Natural killer cell (primary cell): ENCODE measurements at regions of chr22 and their contacts with region 1.

Region 1: DNA sequence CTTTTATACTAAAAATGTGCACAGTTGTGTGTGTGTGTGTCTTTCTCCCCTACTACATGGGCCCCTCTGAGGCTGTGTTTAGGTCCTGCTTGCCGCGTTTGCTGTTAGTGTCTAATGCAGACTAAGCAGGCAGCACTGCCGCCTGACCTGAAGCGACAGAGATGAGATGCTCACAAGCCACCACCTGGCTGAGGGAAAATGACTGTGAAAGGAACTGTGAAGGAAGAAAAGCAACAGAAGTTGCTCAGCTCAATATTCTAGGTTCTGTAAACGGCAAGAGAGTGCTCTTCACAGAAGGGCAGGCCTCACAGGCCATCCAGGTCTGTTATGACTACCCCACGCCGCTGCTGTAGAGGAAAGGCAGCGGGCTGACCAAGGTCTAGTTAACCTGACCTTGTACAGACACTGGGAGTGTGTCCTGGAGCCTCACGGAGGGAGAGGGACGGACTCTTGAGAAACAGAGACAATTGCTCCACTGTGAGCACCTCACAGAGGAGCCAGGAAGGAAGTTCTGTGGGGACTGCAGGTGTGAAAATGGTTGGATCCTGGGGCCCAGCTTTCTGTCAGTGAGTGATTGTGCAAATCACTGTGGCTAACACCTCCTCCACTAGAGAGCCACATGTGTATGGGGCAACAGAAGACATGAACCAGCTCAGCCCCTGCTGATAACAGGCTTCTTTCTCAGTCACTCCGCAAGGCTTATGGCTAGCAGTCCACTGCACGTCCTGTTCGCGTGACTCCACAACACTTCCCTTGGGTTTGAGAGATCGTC is 31.3 kb upstream of the YPEL1 start:
- DNase-seq: peak; percentile 77 to 88
- ATAC-seq: peak; percentile 61 to 84 (median 81)
- H3K4me3 ChIP-seq: peak overlapping the region; percentile 14
- H3K4me3 Mint-ChIP-seq: peak overlapping the region; percentile 64
- H3K27ac ChIP-seq: peak overlapping the region; percentile 88
- H3K27ac Mint-ChIP-seq: peak overlapping the region; percentile 98 to 99
- H3K4me1 ChIP-seq: peaks cover 98% of the 10 kb centered on the region
- H3K4me1 Mint-ChIP-seq: peaks cover 82 to 88% of the 10 kb centered on the region in 2 donors
- H3K27me3 ChIP-seq: no peaks in the 10 kb centered on the region
- H3K27me3 Mint-ChIP-seq: no peaks in the 10 kb centered on the region
- CTCF ChIP-seq: no peak

Region 2: GRCh38 chr22:21735200-21736076 is 31.4 kb before region 1 on chr22 and contains the start of gene YPEL1:
- intact Hi-C with region 1: loop called (anchors 1 kb)
- DNase-seq: peak; percentile 97 to 99
- ATAC-seq: peak; percentile 85 to 97 (median 89)
- H3K4me3 ChIP-seq: peak within 1 kb of the TSS; percentile 66
- H3K4me3 Mint-ChIP-seq: peak within 1 kb of the TSS; percentile 97
- H3K27ac ChIP-seq: peak within 1 kb of the TSS; percentile 82
- H3K27ac Mint-ChIP-seq: peak within 1 kb of the TSS; percentile 95 to 96
- H3K4me1 ChIP-seq: peaks cover 63% of the 10 kb centered on the region
- H3K4me1 Mint-ChIP-seq: peaks cover 65 to 71% of the 10 kb centered on the region in 2 donors
- H3K27me3 ChIP-seq: no peaks in the 10 kb centered on the region
- H3K27me3 Mint-ChIP-seq: no peaks in the 10 kb centered on the region
- CTCF ChIP-seq: no peak
- total RNA-seq, gene YPEL1: 59.9 to 86.3 (median 68.8) TPM

Region 3: DNA sequence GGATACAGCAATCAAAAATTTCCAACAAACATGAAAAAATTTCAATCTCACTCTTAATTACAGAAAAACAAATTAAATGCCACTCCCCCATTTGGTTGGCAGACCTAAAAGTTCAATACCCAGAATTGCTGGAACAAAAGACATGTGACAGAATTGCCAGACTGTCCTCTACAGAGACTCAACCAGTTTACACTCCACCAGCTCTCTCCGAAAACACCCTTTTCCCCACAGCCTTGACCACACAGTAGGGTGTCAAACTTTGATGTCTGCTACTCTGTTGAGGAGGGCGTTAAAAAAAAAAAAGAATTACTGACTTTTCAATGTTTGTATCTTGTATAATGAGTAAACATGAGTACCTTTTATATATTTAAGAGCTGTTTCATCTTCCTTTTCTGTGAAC is 13.4 kb after region 1 on chr22:
- intact Hi-C with region 1: loop called (anchors 1 kb)
- DNase-seq: peak; percentile 43 to 60
- ATAC-seq: peak; percentile 91 to 99 (median 92)
- H3K4me3 ChIP-seq: no peak overlapping the region
- H3K4me3 Mint-ChIP-seq: peak overlapping the region; percentile 74
- H3K27ac ChIP-seq: no peak overlapping the region
- H3K27ac Mint-ChIP-seq: peak overlapping the region; percentile 84 to 87
- H3K4me1 ChIP-seq: peaks cover 32% of the 10 kb centered on the region
- H3K4me1 Mint-ChIP-seq: peaks cover 42 to 55% of the 10 kb centered on the region in 2 donors
- H3K27me3 ChIP-seq: no peaks in the 10 kb centered on the region
- H3K27me3 Mint-ChIP-seq: no peaks in the 10 kb centered on the region
- CTCF ChIP-seq: no peak

Region 4: DNA sequence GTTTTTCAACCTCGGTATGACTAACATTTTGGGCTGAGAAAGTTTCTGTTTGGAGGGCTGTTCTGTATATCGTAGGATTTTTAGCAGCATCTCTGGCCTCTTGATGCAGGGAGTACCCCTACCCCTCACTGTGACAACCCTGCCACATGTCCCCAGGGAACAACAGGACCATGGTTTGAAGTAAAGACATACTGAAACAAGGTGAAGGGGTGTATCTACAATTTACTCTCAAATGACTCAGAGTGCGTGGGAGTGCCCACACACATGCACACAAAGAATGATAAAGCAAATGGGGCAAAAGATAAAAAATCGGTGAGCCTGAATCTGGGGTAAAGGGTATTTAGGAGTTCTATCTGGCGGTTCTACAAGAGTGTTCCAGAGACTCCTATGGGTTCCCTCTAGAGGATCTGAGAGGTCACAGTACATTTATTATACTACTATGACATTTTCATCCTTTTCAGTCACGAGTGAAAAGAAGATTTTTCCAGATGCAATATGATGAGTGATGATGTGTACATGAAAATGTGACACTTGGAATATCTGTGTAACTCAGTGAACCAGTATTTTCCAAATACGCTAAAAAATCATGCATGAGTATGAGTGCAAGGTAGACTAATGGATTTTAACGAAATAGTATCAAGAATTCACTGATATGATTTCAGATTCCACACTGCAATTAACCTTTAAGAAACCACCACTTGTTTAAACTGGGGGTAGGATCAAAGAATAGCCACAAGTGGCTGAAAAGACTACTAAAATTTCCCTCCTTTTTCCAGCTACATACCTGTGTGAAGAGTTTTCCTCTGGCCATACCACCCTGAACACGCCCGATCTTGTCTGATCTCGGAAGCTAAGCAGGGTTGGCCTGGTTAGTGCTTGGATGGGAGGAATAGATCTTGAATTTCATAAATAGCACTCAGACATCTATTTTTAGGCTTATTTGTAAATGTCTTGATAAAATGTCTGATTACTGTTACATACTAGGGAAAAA is 25.1 kb after region 1 on chr22:
- intact Hi-C with region 1: no loop called
- DNase-seq: no peak
- ATAC-seq: peak in 2 of 3 donors; percentile 35 to 49
- H3K4me3 ChIP-seq: no peak overlapping the region
- H3K4me3 Mint-ChIP-seq: no peak overlapping the region
- H3K27ac ChIP-seq: no peak overlapping the region
- H3K27ac Mint-ChIP-seq: peak overlapping the region; percentile 43 to 45
- H3K4me1 ChIP-seq: peaks cover 6% of the 10 kb centered on the region
- H3K4me1 Mint-ChIP-seq: peaks cover 15 to 17% of the 10 kb centered on the region in 2 donors
- H3K27me3 ChIP-seq: no peaks in the 10 kb centered on the region
- H3K27me3 Mint-ChIP-seq: no peaks in the 10 kb centered on the region
- CTCF ChIP-seq: no peak

Region 5: DNA sequence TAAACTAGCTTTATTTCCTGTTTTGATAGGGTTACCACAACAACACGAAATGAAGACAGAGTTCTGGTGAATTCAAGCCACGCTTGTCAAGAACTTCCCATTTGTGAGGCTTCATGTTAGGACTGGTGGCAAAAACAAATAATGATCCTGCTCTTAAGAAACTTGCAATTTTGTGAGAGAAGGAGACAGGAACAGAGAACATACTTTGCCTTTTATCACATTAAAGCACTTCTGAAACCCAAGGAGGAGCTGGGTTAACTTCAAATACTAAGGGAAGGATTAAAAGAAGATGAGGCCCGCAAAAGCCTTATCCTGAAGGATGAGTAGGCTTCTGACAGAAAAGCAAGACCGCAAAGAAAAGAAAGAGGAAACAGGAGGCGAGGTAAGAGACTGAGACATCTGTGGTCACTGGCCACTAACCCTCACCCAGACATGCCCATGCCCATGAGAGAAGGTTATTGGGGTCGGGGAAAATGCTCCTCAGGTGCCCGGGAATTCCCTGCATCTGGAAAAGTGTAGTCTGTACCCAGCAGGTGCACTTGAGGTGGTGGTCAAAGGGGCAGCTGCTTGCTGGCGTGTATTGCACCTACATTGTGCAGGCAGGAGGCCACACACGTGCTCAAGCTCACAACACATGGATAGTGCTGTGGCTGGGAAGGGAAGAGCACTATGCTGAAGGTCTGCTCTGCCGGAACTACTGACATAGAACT is 50.1 kb after region 1 on chr22:
- intact Hi-C with region 1: loop called (anchors 2 kb)
- DNase-seq: peak; percentile 33 to 87
- ATAC-seq: peak; percentile 89 to 94 (median 90)
- H3K4me3 ChIP-seq: no peak overlapping the region
- H3K4me3 Mint-ChIP-seq: peak overlapping the region; percentile 88
- H3K27ac ChIP-seq: peak overlapping the region; percentile 88
- H3K27ac Mint-ChIP-seq: peak overlapping the region; percentile 93 to 97
- H3K4me1 ChIP-seq: peaks cover 61% of the 10 kb centered on the region
- H3K4me1 Mint-ChIP-seq: peaks cover 70 to 78% of the 10 kb centered on the region in 2 donors
- H3K27me3 ChIP-seq: no peaks in the 10 kb centered on the region
- H3K27me3 Mint-ChIP-seq: no peaks in the 10 kb centered on the region
- CTCF ChIP-seq: no peak

Region 6: DNA sequence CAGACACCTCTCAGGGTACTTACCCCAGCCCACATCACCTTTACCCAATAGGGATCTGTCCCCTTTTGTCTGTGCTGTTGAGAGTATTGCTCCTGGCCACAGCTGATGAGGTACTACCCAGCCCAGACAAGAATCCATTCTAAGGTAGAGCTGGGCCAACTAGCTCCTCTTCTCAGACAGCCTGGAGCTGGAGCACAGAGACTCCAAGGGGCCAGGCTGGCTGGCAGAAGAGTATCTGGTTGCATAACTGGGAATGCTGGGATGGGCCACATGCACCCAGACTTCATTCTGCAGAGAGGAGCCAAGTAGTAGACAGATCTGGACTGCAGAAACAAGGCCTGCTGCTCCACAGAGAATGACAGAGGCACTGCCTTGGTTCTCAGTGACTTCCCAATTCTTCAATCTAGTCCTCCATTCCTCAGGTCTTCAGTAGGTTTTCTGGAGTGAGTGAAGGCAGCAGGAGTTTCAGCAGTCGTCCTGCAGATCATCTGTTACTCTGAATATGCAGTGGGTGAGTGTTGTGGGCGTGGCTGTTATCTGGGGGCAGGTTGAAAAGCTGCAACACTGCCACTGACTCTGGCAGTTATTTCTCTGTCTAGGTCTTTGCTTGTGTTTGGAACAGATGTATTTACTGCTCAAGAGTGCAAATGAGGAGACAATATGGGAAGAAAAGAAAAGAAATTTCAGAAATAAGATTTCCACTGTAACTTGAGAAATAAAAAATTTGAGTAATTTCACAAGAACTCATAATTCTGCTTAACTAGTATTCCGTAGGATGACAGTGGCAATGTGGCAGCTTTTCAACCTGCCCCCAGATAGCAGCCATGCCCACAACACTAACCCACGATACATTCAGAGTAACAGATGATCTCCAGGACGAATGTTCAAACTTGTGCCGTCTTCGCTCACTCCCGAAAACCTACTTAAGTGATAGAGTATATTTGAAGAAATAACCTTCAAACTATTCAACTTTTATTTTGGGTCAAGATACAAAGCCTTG is 65.7 kb after region 1 on chr22:
- intact Hi-C with region 1: loop called (anchors 5 kb)
- DNase-seq: peak; percentile 39 to 42
- ATAC-seq: peak; percentile 86 to 93 (median 88)
- H3K4me3 ChIP-seq: no peak overlapping the region
- H3K4me3 Mint-ChIP-seq: peak overlapping the region; percentile 77
- H3K27ac ChIP-seq: peak overlapping the region; percentile 26
- H3K27ac Mint-ChIP-seq: peak overlapping the region; percentile 60 to 80
- H3K4me1 ChIP-seq: peaks cover 31% of the 10 kb centered on the region
- H3K4me1 Mint-ChIP-seq: peaks cover 80 to 83% of the 10 kb centered on the region in 2 donors
- H3K27me3 ChIP-seq: no peaks in the 10 kb centered on the region
- H3K27me3 Mint-ChIP-seq: no peaks in the 10 kb centered on the region
- CTCF ChIP-seq: no peak

Region 7: DNA sequence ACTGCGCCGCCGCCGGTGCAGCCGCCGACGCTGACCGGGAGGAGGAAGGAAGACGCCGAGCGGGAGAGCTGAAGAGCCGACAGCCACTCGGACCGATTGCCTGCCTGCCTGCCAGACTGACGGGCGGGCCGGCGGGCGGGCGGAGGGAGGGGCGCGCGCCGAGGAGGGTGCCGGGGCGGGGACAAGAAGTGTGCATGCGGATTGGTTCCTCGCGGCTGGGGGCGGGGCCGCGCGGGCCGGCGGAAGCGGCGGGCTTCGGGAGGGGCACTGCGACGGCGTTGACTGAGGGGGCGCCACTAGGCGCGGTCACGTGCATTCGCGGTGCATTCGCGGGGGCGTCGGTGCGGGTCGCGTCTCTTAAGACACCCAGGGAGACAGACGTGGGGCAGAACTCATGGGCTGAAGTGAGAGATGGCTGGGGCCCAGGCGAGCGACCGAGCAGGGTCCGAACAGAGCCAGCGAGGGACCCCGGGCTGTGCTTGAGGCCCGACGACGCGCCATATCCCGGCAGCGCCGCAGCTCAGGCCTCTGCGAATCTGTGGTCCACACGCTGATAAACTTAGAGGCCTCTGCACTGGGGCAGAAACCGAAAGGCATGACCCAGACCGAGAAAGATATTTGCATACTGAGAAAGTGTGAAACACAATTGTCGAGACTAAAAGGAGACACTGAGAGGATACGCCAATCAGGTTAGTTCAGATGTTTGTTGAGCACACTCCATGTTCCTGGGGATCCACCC is 100.8 kb after region 1 on chr22 and contains the start of gene MAPK1:
- intact Hi-C with region 1: loop called (anchors 2 kb)
- DNase-seq: peak; percentile 95
- ATAC-seq: peak; percentile 88 to 97 (median 90)
- H3K4me3 ChIP-seq: peak within 1 kb of the TSS; percentile 88
- H3K4me3 Mint-ChIP-seq: peak within 1 kb of the TSS; percentile 98
- H3K27ac ChIP-seq: peak within 1 kb of the TSS; percentile 99
- H3K27ac Mint-ChIP-seq: peak within 1 kb of the TSS; percentile 94 to 96
- H3K4me1 ChIP-seq: peaks cover 32% of the 10 kb centered on the region
- H3K4me1 Mint-ChIP-seq: peaks cover 50 to 54% of the 10 kb centered on the region in 2 donors
- H3K27me3 ChIP-seq: no peaks in the 10 kb centered on the region
- H3K27me3 Mint-ChIP-seq: no peaks in the 10 kb centered on the region
- CTCF ChIP-seq: peak; percentile 32
- total RNA-seq, gene MAPK1: 189 to 246 (median 214) TPM